ENCODE measurements at regions of chr16 and their contacts with region 1.

Region 1: DNA sequence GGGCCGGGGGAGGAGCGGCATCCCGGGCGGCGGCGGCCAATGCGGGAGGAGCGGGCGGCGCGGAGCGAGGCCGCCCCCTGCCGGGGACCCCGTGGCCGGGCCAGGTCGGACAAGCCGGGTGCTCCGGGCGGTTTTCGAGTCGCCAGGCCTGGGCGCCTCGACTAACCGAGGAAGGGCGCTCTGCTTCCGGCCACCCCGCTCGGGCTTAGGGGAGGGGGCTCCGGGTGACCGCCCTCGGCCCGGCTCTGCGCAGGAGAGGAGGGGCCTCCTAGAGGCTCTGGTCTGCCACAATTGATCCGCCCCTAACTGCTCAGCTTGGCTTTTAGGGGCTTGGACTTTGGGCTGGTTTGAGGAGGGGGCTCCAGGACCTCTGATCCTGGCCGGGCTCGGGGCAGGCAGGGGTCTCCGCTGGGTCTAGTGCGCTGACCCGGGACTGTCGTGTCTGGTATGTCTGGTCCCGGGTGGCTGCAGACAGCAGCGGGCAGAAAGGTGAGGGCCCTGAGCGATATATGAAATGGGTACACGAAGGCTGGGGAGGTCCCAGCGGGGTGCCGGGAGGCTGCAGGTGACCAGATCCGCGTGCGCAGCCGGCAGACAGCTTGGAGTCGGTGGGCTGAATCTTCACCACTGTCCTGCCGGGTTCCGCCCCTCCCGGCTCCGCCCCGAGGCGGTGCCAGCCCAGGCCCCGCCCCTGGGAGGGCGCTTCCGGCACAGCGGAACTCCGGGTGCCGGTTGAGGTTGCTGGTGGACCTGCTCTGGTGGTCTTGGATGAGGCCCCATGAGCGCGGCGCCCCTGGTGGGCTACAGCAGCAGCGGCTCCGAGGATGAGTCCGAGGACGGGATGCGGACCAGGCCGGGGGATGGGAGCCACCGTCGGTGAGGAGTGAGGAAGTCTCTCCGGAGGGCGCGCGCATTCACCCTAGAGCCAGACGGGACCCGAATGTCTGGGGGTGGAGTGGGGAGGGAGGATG is at the start of gene USB1:
- DNase-seq: peak; percentile 89
- ATAC-seq: peak; percentile 79
- H3K4me3 Mint-ChIP-seq: peak within 1 kb of the TSS; percentile 91
- H3K27ac Mint-ChIP-seq: peak within 1 kb of the TSS; percentile 80
- H3K4me1 Mint-ChIP-seq: peaks cover 41% of the 10 kb centered on the region
- H3K27me3 Mint-ChIP-seq: no peaks in the 10 kb centered on the region
- total RNA-seq, gene USB1: 37.3 to 38.5 TPM

Region 2: DNA sequence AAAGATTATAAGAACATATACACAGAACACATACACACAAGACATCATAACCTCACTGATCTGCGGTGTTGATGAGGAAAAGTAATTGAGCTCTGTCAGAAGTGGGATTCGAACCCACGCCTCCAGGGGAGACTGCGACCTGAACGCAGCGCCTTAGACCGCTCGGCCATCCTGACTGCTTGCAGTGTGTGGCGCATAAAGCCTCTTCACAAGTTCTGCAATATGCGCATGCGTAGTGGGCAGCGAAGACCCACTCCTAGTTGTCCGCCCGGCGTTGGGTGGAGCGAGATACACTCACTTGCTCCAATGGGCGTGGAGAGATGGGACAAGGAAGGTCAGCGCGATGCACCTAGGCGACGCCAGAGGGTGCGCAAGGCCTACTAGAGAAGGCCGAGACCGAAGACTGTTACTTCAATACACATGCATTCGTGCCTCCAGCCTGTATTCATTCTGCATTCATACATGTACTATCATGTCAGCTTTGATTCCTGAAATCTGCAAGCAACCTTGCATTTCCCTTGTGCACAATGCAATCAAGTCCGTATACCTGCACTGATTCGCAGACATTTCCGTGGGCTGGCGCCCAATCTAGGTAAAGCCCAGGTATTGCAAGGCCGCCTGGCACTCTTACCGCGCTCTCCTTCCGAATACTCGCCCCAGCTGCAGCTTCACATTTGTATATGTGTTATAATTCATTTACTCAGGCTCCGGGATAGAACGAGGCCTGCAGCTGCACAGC is 700.4 kb before region 1 on chr16:
- CTCF ChIA-PET with region 1: no interaction called
- POLR2A ChIA-PET with region 1: no interaction called
- intact Hi-C with region 1: loop called in 1 of 2 experiments (anchors 1 kb)
- DNase-seq: peak; percentile 99
- ATAC-seq: peak; percentile 89
- H3K4me3 Mint-ChIP-seq: no peak overlapping the region
- H3K27ac Mint-ChIP-seq: no peak overlapping the region
- H3K4me1 Mint-ChIP-seq: peaks cover 3% of the 10 kb centered on the region
- H3K27me3 Mint-ChIP-seq: no peaks in the 10 kb centered on the region

Region 3: GRCh38 chr16:57576429-57576870 is 424.5 kb before region 1 on chr16:
- CTCF ChIA-PET with region 1: interaction called, 5 read pairs
- POLR2A ChIA-PET with region 1: no interaction called
- intact Hi-C with region 1: loop called (anchors 2 to 5 kb)
- DNase-seq: peak; percentile 91
- ATAC-seq: peak; percentile 82
- H3K4me3 Mint-ChIP-seq: no peak overlapping the region
- H3K27ac Mint-ChIP-seq: no peak overlapping the region
- H3K4me1 Mint-ChIP-seq: peaks cover 33% of the 10 kb centered on the region
- H3K27me3 Mint-ChIP-seq: peaks cover 5% of the 10 kb centered on the region

Region 4: GRCh38 chr16:57802341-57803133 is 198.5 kb before region 1 on chr16 and contains the start of gene KIFC3:
- CTCF ChIA-PET with region 1: no interaction called
- POLR2A ChIA-PET with region 1: no interaction called
- intact Hi-C with region 1: loop called (anchors 2 to 10 kb)
- DNase-seq: peak; percentile 86
- ATAC-seq: peak; percentile 83
- H3K4me3 Mint-ChIP-seq: peak within 1 kb of the TSS; percentile 63
- H3K27ac Mint-ChIP-seq: peak within 1 kb of the TSS; percentile 23
- H3K4me1 Mint-ChIP-seq: peaks cover 18% of the 10 kb centered on the region
- H3K27me3 Mint-ChIP-seq: peaks cover 27% of the 10 kb centered on the region
- total RNA-seq, gene KIFC3: 0.32 to 0.66 TPM

Region 5: DNA sequence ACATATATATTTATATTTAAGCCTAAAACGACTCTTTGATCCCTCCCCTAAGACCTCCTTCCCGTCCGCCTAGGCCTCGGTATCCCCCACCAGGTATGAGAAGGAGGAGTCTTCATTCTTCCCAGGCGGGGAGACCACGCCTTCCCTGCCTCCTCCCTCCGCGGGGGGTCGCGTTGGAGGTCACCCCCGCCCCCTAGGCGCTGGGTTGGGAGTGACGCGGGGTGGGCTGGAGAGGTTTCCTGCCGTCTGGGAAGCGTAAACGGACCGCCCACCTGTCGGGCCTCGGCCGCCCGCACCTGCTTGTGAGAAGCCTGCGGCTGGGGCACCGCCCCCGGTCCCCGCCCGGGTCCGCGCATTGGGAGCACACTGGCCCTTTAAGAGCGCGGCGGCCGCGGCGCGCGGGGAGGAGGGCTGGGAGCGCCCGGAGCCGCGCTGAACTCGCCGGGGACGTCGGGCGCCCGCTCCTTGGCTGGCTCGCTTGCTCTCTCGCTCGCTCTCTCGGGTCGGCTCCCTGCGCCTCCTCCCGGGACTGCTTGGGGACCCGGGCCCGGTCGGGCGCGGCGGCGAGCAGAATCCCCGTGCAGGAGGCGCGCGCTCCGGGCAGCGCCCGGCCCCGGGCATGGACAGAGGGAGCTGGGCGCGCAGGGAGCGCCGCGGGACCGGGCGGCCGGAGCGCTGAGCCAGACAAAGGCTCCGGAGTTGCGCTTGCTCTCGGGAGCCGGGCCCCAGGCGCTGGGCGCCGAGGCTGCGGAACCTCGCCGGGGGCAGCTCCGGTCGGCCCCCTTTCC is 24.6 kb after region 1 on chr16 and contains the start of gene MMP15:
- CTCF ChIA-PET with region 1: interaction called, 3 read pairs
- POLR2A ChIA-PET with region 1: no interaction called
- intact Hi-C with region 1: loop called in 1 of 2 experiments (anchors 2 kb)
- DNase-seq: peak; percentile 77
- ATAC-seq: peak; percentile 77
- H3K4me3 Mint-ChIP-seq: peak within 1 kb of the TSS; percentile 72
- H3K27ac Mint-ChIP-seq: peak within 1 kb of the TSS; percentile 75
- H3K4me1 Mint-ChIP-seq: peaks cover 10% of the 10 kb centered on the region
- H3K27me3 Mint-ChIP-seq: peaks cover 5% of the 10 kb centered on the region
- total RNA-seq, gene MMP15: 0.19 to 0.43 TPM

Region 6: GRCh38 chr16:58047557-58048348 is 46.8 kb after region 1 on chr16:
- CTCF ChIA-PET with region 1: no interaction called
- POLR2A ChIA-PET with region 1: no interaction called
- intact Hi-C with region 1: no loop called
- DNase-seq: no peak
- ATAC-seq: no peak
- H3K4me3 Mint-ChIP-seq: no peak overlapping the region
- H3K27ac Mint-ChIP-seq: no peak overlapping the region
- H3K4me1 Mint-ChIP-seq: no peaks in the 10 kb centered on the region
- H3K27me3 Mint-ChIP-seq: no peaks in the 10 kb centered on the region

Region 7: DNA sequence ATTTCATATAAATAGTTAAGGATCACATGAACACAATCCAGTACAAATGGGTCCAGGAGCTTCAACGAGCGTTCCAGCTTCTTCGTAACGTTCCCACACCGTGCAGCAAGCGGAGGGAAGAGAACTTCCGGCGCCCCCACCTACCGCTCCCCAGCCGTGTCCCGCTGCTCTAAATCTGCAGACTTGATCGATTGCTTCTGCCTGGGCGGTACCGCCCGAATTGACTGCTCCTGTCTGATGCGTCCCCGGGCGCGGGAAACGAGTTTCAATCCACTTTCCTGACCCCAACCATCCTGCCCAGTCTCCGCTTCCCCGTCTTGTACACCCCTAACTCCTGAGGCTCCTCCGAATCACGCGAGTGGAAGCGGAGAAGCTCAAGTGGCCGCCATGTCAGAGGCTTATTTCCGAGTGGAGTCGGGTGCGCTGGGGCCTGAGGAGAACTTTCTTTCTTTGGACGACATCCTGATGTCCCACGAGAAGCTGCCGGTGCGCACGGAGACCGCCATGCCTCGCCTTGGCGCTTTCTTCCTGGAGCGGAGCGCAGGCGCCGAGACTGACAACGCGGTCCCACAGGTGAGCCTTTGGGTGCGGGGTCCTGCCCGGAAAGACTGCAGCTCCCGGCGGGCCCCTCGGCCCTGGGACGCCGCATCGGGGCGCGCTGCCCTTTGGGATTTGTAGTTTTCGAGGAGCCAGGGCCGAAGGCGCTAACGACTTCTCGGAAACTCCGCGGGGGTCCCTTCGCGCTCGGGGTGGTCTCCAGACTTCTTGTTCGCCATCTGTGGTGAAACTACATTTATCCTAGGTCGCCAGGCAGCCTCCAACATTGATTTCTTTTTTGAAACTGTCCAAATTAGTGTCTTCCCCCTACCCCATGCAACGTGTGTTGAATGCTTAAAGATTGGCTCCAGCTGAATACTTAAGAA is 391.5 kb after region 1 on chr16 and contains the start of gene GINS3:
- CTCF ChIA-PET with region 1: no interaction called
- POLR2A ChIA-PET with region 1: no interaction called
- intact Hi-C with region 1: loop called in 1 of 2 experiments (anchors 1 kb)
- DNase-seq: peak; percentile 93
- ATAC-seq: peak; percentile 96
- H3K4me3 Mint-ChIP-seq: peak within 1 kb of the TSS; percentile 100
- H3K27ac Mint-ChIP-seq: peak within 1 kb of the TSS; percentile 100
- H3K4me1 Mint-ChIP-seq: peaks cover 12% of the 10 kb centered on the region
- H3K27me3 Mint-ChIP-seq: no peaks in the 10 kb centered on the region
- total RNA-seq, gene GINS3: 20.2 to 23.0 TPM